ENCODE measurements at regions of chr18 and their contacts with region 1.

Region 1: DNA sequence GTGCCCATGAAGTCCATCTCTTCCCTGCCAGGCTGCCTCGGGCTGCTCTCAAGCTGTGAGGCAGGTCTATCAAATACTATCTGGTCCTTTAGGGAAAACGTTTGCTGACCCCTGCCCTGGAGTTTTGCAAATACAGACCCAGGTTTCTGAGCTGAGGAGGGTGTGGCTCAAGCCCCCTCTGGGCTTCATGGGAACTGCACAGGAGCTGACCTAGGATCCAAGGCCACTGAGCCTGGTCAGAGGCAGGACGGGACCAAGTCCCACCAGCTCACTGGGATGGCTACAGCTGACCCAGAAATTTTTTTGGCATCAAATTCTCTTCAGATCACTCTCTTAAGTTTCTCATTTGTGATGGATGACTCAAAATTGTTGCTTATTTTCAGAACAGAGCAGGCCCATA is 14.1 kb downstream of the ZNF516 start:
- DNase-seq: no peak
- H3K4me3 ChIP-seq: no peak overlapping the region
- H3K27ac ChIP-seq: no peak overlapping the region
- H3K4me1 ChIP-seq: peaks cover 26% of the 10 kb centered on the region
- H3K27me3 ChIP-seq: no peaks in the 10 kb centered on the region
- CTCF ChIP-seq: no peak
- EP300 ChIP-seq: no peak
- POLR2A ChIP-seq: no peak

Region 2: DNA sequence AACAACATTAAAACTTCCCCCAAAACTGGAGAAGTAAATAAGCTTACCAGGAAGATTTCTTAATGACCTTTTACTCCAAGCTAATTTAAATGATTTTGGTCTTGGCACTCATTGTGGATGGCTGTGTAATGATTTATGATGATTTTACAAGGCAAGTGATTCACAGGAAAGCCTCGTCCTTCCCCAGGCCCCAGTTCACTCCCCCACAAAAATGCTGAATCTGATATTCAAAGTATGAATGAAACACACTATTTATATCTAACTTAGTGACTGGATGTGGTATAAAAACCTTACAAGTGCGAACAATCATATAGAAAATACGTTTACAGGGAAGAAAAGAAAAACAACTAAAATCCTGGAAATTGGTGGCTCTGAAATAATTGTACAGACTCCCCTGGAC is 35.6 kb before region 1 on chr18:
- intact Hi-C with region 1: loop called in 1 of 4 experiments (anchors 5 kb)
- DNase-seq: no peak
- H3K4me3 ChIP-seq: no peak overlapping the region
- H3K27ac ChIP-seq: peak overlapping the region in 1 of 2 donors; percentile 8
- H3K4me1 ChIP-seq: peaks cover 28% of the 10 kb centered on the region
- H3K27me3 ChIP-seq: no peaks in the 10 kb centered on the region
- CTCF ChIP-seq: no peak
- EP300 ChIP-seq: no peak
- POLR2A ChIP-seq: no peak

Measured in ovary (tissue), 10 donors.